Activated CD4-positive, alpha-beta memory T cell treated with anti-CD3 and anti-CD28 coated beads for 36 hours (primary cell): ENCODE measurements at regions of chr17 and their contacts with region 1.

Region 1: GRCh38 chr17:3695723-3696411 is at the start of gene P2RX5:
- DNase-seq: peak; percentile 56
- H3K4me3 Mint-ChIP-seq: peak within 1 kb of the TSS; percentile 87
- H3K27ac Mint-ChIP-seq: peak within 1 kb of the TSS; percentile 76
- H3K4me1 Mint-ChIP-seq: peaks cover 20% of the 10 kb centered on the region
- H3K27me3 Mint-ChIP-seq: no peaks in the 10 kb centered on the region
- total RNA-seq, gene P2RX5: 37.6 to 43.2 TPM

Region 2: DNA sequence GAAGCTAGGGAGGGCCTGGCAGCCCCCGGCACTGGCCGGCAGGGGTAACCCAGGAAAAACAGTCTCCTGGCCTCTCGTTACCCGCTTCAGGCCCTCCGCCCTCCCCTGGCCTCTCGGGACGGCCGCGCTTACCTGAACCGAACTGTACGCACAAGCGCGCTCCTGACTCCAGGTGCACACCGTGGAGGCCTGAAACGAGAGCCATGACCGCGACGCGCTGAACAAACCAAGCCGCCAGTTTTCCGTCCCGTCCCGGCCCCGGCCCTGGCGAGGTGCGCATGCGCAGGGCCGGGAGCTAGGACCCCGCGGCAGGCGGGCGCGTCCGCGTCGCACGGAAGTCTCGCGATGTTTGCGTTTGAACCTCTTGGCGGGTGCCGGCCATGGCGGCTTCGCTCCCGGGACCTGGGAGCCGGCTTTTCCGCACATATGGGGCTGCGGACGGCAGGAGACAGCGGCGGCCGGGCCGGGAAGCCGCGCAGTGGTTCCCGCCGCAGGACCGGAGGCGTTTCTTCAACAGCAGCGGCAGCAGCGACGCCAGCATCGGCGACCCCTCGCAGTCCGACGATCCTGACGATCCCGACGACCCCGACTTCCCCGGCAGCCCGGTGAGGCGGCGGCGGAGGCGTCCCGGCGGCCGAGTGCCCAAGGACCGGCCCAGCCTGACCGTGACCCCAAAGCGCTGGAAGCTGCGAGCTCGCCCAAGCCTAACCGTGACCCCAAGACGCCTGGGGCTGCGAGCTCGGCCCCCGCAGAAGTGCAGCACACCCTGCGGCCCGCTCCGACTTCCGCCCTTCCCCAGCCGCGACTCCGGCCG is 27.9 kb after region 1 on chr17 and contains the start of gene HASPIN:
- CTCF ChIA-PET with region 1: interaction called, 3 read pairs
- POLR2A ChIA-PET with region 1: interaction called, 10 read pairs
- intact Hi-C with region 1: no loop called
- DNase-seq: peak; percentile 95
- H3K4me3 Mint-ChIP-seq: peak within 1 kb of the TSS; percentile 97
- H3K27ac Mint-ChIP-seq: peak within 1 kb of the TSS; percentile 90
- H3K4me1 Mint-ChIP-seq: peaks cover 54% of the 10 kb centered on the region
- H3K27me3 Mint-ChIP-seq: no peaks in the 10 kb centered on the region
- total RNA-seq, gene HASPIN: 22.0 to 22.7 TPM